ENCODE measurements at regions of chr14 and their contacts with region 1.

Region 1: DNA sequence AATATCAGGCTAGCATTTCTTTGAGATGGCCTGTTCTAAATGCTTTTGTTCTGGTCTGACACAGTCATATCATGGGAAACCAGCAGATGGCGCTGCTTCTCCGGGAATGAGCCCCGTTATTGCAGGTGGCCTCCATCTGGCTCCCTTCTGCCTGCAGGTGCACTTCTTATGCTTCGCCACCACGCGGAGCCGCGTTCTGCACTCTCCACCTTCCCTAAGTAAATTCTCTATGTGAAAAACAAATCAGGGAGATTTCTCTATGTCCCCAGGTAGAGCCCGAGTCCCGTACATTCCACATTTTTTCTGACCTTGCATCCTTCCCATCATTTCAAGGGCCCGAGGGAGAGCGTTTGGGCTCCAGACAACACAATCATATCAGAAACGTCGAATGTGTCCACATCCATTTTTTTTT is 26.2 kb downstream of the GLRX5 start:
- DNase-seq: peak; percentile 87
- CTCF ChIP-seq: peak; percentile 88

Region 2: GRCh38 chr14:95679998-95680735 is 119.2 kb after region 1 on chr14:
- in situ Hi-C with region 1: loop called (anchors 10 kb)
- DNase-seq: peak; percentile 54
- CTCF ChIP-seq: peak; percentile 34

Region 3: DNA sequence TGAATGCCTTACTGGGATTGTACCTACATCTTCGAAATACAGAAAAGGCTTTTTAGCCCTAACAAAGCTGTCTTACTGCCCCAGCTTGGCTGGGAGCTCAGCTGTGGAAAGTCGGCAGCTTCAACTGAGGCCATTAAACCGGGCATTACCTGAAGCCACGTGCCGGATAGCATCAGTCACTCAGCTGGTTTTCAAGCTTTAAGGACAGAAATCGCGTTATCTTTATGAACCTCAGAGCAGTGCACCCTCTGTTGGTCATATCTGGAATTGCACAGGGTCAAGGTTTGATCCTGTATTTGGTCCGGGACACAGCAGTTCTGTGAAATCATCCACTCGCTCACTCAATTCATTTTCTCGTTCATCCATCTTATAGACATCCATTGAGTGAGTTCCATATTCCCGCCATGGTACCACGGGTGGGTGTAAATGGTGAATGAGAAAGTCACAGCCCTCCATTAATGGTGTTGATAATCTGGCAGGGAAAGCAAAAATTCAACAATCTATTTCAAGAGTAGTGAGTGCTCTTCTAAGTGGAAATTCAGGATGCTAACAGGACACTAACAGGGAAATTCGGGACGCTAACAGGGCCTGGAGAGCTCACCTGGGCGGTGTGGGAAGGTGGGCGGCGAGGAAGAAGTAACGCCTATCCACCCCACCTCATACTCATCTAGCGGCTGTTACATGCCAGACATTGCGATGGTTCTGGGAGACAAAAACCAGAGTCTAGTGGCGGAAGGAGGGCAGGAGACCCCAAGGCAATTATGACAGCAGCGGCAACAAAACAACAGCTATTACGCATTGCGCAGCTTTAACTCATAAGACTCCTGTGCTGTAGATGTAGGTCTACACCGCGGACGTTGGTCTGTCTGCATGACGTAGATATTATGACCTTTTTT is 213.5 kb after region 1 on chr14:
- in situ Hi-C with region 1: loop called (anchors 10 kb)
- DNase-seq: peak; percentile 81
- CTCF ChIP-seq: peak; percentile 89

Region 4: GRCh38 chr14:95993768-95994592 is 433.0 kb after region 1 on chr14:
- in situ Hi-C with region 1: loop called (anchors 10 kb)
- DNase-seq: peak; percentile 41
- CTCF ChIP-seq: peak; percentile 46